Prostate gland (tissue), 2 donors: ENCODE measurements at regions of chr9 and their contacts with region 1.

Region 1: GRCh38 chr9:114214173-114214572 is 58.8 kb downstream of the COL27A1 start:
- DNase-seq: peak; percentile 29
- H3K4me3 ChIP-seq: no peak overlapping the region
- H3K27ac ChIP-seq: peak overlapping the region; percentile 19 to 53
- H3K4me1 ChIP-seq: no peaks in the 10 kb centered on the region
- H3K27me3 ChIP-seq: no peaks in the 10 kb centered on the region
- CTCF ChIP-seq: no peak
- POLR2A ChIP-seq: no peak

Region 2: DNA sequence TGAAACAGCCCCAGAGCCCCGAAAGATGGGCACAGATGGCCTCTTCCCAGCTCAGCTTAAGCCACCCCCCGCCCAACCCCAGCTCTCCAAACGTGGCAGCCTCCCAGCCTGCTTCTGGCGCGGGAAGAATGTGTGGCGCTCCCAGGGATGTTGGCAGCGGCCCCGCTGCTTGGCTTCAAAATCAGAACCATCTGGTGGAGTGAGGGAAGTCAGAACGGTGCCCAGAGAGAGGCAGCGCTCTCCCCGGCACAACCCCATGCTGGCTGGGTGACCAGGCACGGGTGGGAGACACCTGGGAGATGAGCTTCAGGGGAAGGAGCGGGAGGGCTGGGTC is 36.0 kb after region 1 on chr9:
- intact Hi-C with region 1: loop called (anchors 5 kb)
- DNase-seq: peak; percentile 87
- H3K4me3 ChIP-seq: no peak overlapping the region
- H3K27ac ChIP-seq: peak overlapping the region; percentile 34 to 48
- H3K4me1 ChIP-seq: no peaks in the 10 kb centered on the region
- H3K27me3 ChIP-seq: no peaks in the 10 kb centered on the region
- CTCF ChIP-seq: no peak
- POLR2A ChIP-seq: no peak

Region 3: GRCh38 chr9:114348906-114349482 is 134.8 kb after region 1 on chr9:
- intact Hi-C with region 1: no loop called
- DNase-seq: no peak
- H3K4me3 ChIP-seq: no peak overlapping the region
- H3K27ac ChIP-seq: no peak overlapping the region
- H3K4me1 ChIP-seq: no peaks in the 10 kb centered on the region
- H3K27me3 ChIP-seq: no peaks in the 10 kb centered on the region
- CTCF ChIP-seq: no peak
- POLR2A ChIP-seq: no peak